Activated CD4-positive, alpha-beta T cell treated with anti-CD3 and anti-CD28 coated beads, Interleukin-2, amount 10 ng/mL, durations not matched to agents 7 days and 5 days (primary cell): ENCODE measurements at regions of chr1 and their contacts with region 1.

Region 1: DNA sequence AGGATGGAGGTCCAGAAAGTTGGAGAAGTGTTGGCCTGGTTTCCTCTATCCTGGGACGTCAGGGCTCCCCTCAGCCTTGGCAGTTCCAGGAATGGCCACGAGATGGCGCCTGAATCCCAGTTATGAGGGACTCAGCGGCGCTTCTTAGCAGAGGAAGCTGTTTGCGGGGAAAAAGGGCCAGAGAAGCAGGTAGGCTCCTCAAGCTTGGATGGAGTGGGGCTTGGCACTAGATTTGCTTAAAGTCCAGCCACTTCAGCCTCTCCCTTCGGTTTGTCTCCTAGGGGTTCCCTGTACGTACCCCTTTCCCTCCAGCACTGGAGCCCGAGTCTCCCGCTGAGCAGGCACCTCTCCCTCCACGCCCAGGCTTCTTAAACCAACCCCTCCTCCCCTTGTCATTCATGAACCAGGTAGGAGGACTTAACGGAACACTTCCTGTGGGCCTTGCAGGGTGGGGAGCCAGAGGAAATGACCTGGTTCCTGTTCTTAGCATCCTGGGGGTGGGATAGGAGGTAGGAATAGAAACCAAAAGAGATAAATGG is 32.0 kb upstream of the TENT5B start:
- DNase-seq: peak; percentile 91
- H3K4me3 Mint-ChIP-seq: peak overlapping the region; percentile 63
- H3K27ac Mint-ChIP-seq: peak overlapping the region; percentile 73
- H3K4me1 Mint-ChIP-seq: peaks cover 22% of the 10 kb centered on the region
- H3K27me3 Mint-ChIP-seq: no peaks in the 10 kb centered on the region

Region 2: GRCh38 chr1:27031235-27032118 is 13.2 kb before region 1 on chr1:
- CTCF ChIA-PET with region 1: interaction called, 14 read pairs
- POLR2A ChIA-PET with region 1: no interaction called
- DNase-seq: no peak
- H3K4me3 Mint-ChIP-seq: no peak overlapping the region
- H3K27ac Mint-ChIP-seq: no peak overlapping the region
- H3K4me1 Mint-ChIP-seq: peaks cover 2% of the 10 kb centered on the region
- H3K27me3 Mint-ChIP-seq: peaks cover 3% of the 10 kb centered on the region

Region 3: DNA sequence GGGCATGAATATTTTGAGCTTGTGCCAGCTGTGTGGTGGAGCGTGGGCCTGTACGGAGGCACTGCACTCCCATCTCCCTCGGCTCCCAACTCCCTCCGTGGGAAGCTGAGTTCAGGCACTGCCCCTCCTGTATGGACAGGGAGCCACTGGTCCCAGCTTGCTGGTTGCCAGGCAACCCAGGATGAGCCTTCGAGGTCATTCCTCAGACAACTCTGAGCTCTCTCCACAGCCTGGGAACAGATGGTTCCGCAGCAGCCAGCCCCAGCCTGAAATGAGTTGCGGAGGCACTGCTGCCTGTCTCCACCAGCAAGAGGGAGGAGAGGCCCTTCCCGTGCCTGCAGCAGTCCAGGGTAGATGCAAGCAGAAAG is 26.4 kb after region 1 on chr1:
- CTCF ChIA-PET with region 1: interaction called, 12 read pairs
- POLR2A ChIA-PET with region 1: no interaction called
- DNase-seq: no peak
- H3K4me3 Mint-ChIP-seq: no peak overlapping the region
- H3K27ac Mint-ChIP-seq: no peak overlapping the region
- H3K4me1 Mint-ChIP-seq: no peaks in the 10 kb centered on the region
- H3K27me3 Mint-ChIP-seq: no peaks in the 10 kb centered on the region

Region 4: GRCh38 chr1:27097484-27097917 is 52.8 kb after region 1 on chr1:
- CTCF ChIA-PET with region 1: interaction called, 166 read pairs
- POLR2A ChIA-PET with region 1: interaction called, 5 read pairs
- DNase-seq: peak; percentile 79
- H3K4me3 Mint-ChIP-seq: no peak overlapping the region
- H3K27ac Mint-ChIP-seq: no peak overlapping the region
- H3K4me1 Mint-ChIP-seq: peaks cover 13% of the 10 kb centered on the region
- H3K27me3 Mint-ChIP-seq: no peaks in the 10 kb centered on the region

Region 5: DNA sequence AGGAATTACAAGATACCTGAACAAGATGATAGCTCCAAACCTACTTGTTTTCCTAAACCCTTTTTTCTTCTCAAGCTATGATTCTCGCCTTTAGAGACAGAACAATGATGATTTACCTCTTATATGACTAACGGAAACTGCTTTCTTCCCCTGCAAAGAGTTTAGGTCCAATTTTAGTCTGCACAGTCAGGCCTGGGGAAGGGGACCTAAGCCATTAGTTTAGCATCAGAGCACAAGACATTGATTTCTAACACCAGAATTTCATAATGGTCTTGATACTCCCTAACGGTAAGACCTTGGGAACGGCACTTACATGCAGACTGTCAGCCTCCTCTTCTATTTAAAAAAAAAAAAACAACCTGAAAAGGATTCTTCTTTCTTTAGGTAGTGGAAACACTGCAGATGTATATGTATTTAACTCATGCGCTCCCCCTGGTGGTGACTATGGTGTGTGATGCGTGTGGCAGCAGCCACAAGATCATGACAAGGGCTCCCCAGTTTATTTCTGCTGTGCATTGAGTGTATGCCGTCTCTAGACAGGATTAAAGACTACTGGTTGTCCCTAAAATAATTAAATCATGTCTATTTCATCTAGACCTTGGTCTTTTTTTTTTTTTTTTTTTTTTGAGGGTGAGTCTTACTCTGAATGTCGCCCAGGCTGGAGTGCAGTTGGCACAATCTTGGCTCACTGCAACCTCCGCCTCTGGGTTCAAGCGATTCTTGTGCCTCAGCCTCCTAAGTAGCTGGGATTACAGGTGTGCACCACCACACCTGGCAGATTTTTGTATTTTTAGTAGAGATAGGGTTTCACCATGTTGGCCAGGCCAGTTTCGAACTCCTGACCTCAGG is 240.0 kb after region 1 on chr1:
- CTCF ChIA-PET with region 1: interaction called, 11 read pairs
- POLR2A ChIA-PET with region 1: interaction called, 4 read pairs
- DNase-seq: peak; percentile 94
- H3K4me3 Mint-ChIP-seq: no peak overlapping the region
- H3K27ac Mint-ChIP-seq: no peak overlapping the region
- H3K4me1 Mint-ChIP-seq: no peaks in the 10 kb centered on the region
- H3K27me3 Mint-ChIP-seq: no peaks in the 10 kb centered on the region

Region 6: GRCh38 chr1:27300341-27301051 is 255.8 kb after region 1 on chr1:
- CTCF ChIA-PET with region 1: interaction called, 11 read pairs
- POLR2A ChIA-PET with region 1: no interaction called
- DNase-seq: peak; percentile 75
- H3K4me3 Mint-ChIP-seq: no peak overlapping the region
- H3K27ac Mint-ChIP-seq: no peak overlapping the region
- H3K4me1 Mint-ChIP-seq: peaks cover 5% of the 10 kb centered on the region
- H3K27me3 Mint-ChIP-seq: no peaks in the 10 kb centered on the region